ENCODE measurements at regions of chr16 and their contacts with region 1.

Region 1: DNA sequence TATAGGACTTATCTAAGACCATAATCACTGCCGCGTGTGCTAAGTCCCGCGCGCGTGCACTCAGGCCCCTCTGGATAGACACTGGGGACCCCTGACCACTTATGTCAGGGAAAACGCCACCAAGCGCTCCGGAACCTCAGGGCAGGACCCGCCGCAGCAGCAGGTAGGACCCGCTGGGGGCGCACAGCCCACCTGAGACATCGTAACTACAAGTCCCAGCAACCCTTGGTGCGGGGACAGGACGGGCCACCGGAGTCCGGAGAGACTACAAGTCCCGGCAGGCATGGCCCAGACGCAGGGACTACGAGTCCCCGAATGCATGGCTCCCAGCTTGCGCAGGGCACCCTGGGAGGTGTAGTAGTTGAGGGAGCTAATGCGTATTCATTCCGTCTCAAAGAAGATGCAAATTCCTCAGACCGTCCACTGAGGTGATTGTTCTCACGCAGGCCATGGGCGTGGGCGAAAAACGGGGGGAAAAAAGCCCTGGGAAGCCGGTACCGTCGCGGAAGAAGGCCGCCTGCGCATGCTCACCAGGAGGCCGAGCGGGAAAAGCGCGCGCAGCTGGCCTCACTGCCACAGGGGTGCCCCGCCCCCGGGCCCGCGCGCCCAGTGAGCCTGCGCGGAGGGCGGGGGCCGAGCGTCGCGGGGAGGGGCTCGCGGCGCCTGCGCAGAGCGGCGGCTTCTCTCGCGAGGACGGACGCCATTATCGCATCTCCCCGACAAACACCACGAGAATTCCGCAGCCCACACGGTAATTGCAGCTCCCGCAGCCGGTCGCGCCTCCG is at the start of gene BANP:
- DNase-seq: peak; percentile 96 to 99 (median 99)
- ATAC-seq: peak; percentile 93
- H3K4me3 ChIP-seq: peak within 1 kb of the TSS; percentile 83
- H3K4me3 Mint-ChIP-seq: peak within 1 kb of the TSS; percentile 92 to 100 (median 99)
- H3K27ac ChIP-seq: peak within 1 kb of the TSS; percentile 90
- H3K27ac Mint-ChIP-seq: peak within 1 kb of the TSS; percentile 97 to 100 (median 99)
- H3K4me1 ChIP-seq: peaks cover 15 to 33% of the 10 kb centered on the region in 2 donors
- H3K4me1 Mint-ChIP-seq: peaks cover 27 to 66% (median 43%) of the 10 kb centered on the region in 7 donors
- H3K27me3 ChIP-seq: no peaks in the 10 kb centered on the region
- H3K27me3 Mint-ChIP-seq: peaks cover 0 to 8% (median 2%) of the 10 kb centered on the region in 5 donors
- total RNA-seq, gene BANP: 43.6 to 81.2 (median 68.5) TPM

Region 2: GRCh38 chr16:87316923-87317749 is 633.8 kb before region 1 on chr16 and contains the start of gene C16orf95:
- CTCF ChIA-PET with region 1: no interaction called
- POLR2A ChIA-PET with region 1: interaction called, 4 read pairs
- intact Hi-C with region 1: loop called in 1 of 2 experiments (anchors 10 kb)
- DNase-seq: peak; percentile 93 to 100 (median 96)
- ATAC-seq: peak; percentile 96
- H3K4me3 ChIP-seq: peak within 1 kb of the TSS; percentile 86
- H3K4me3 Mint-ChIP-seq: peak within 1 kb of the TSS; percentile 92 to 100 (median 97)
- H3K27ac ChIP-seq: peak within 1 kb of the TSS; percentile 91
- H3K27ac Mint-ChIP-seq: peak within 1 kb of the TSS; percentile 91 to 99 (median 94)
- H3K4me1 ChIP-seq: peaks cover 8 to 11% of the 10 kb centered on the region in 2 donors
- H3K4me1 Mint-ChIP-seq: peaks cover 11 to 23% (median 16%) of the 10 kb centered on the region in 7 donors
- H3K27me3 ChIP-seq: no peaks in the 10 kb centered on the region
- H3K27me3 Mint-ChIP-seq: peaks cover 0 to 2% (median 0%) of the 10 kb centered on the region in 5 donors
- total RNA-seq, gene C16orf95: 1.3 to 8.6 (median 2.6) TPM

Region 3: GRCh38 chr16:87492721-87493607 is 458.0 kb before region 1 on chr16 and contains the start of gene ZCCHC14:
- CTCF ChIA-PET with region 1: no interaction called
- POLR2A ChIA-PET with region 1: no interaction called
- intact Hi-C with region 1: loop called in 1 of 2 experiments (anchors 2 kb)
- DNase-seq: peak; percentile 95 to 99 (median 98)
- ATAC-seq: peak; percentile 97
- H3K4me3 ChIP-seq: peak within 1 kb of the TSS; percentile 75
- H3K4me3 Mint-ChIP-seq: peak within 1 kb of the TSS; percentile 85 to 95 (median 90)
- H3K27ac ChIP-seq: peak within 1 kb of the TSS; percentile 66
- H3K27ac Mint-ChIP-seq: peak within 1 kb of the TSS; percentile 81 to 93 (median 85)
- H3K4me1 ChIP-seq: peaks cover 21 to 36% of the 10 kb centered on the region in 2 donors
- H3K4me1 Mint-ChIP-seq: peaks cover 24 to 59% (median 40%) of the 10 kb centered on the region in 7 donors
- H3K27me3 ChIP-seq: no peaks in the 10 kb centered on the region
- H3K27me3 Mint-ChIP-seq: peaks cover 0 to 53% (median 0%) of the 10 kb centered on the region in 5 donors
- total RNA-seq, gene ZCCHC14: 8.3 to 34.2 (median 23.5) TPM

Region 4: GRCh38 chr16:87895641-87896141 is 55.3 kb before region 1 on chr16:
- CTCF ChIA-PET with region 1: no interaction called
- POLR2A ChIA-PET with region 1: interaction called, 3 read pairs
- intact Hi-C with region 1: loop called in 1 of 2 experiments (anchors 2 kb)
- DNase-seq: peak in 4 of 9 donors; percentile 20 to 80 (median 28)
- ATAC-seq: peak; percentile 86
- H3K4me3 ChIP-seq: peak overlapping the region; percentile 22
- H3K4me3 Mint-ChIP-seq: peak overlapping the region in 8 of 10 donors; percentile 53 to 84 (median 60)
- H3K27ac ChIP-seq: peak overlapping the region; percentile 21
- H3K27ac Mint-ChIP-seq: peak overlapping the region in 8 of 9 donors; percentile 69 to 98 (median 86)
- H3K4me1 ChIP-seq: peaks cover 33 to 37% of the 10 kb centered on the region in 2 donors
- H3K4me1 Mint-ChIP-seq: peaks cover 21 to 50% (median 35%) of the 10 kb centered on the region in 7 donors
- H3K27me3 ChIP-seq: no peaks in the 10 kb centered on the region
- H3K27me3 Mint-ChIP-seq: no peaks in the 10 kb centered on the region

Region 5: GRCh38 chr16:88569985-88570690 is 619.2 kb after region 1 on chr16 and contains the start of gene ZC3H18:
- CTCF ChIA-PET with region 1: no interaction called
- POLR2A ChIA-PET with region 1: no interaction called
- intact Hi-C with region 1: loop called (anchors 1 kb)
- DNase-seq: peak; percentile 93 to 99 (median 96)
- ATAC-seq: peak; percentile 99
- H3K4me3 ChIP-seq: peak within 1 kb of the TSS; percentile 84
- H3K4me3 Mint-ChIP-seq: peak within 1 kb of the TSS; percentile 81 to 93 (median 87)
- H3K27ac ChIP-seq: peak within 1 kb of the TSS; percentile 91
- H3K27ac Mint-ChIP-seq: peak within 1 kb of the TSS; percentile 45 to 93 (median 89)
- H3K4me1 ChIP-seq: peaks cover 21% of the 10 kb centered on the region in 2 donors
- H3K4me1 Mint-ChIP-seq: peaks cover 10 to 39% (median 34%) of the 10 kb centered on the region in 7 donors
- H3K27me3 ChIP-seq: no peaks in the 10 kb centered on the region
- H3K27me3 Mint-ChIP-seq: no peaks in the 10 kb centered on the region
- total RNA-seq, gene ZC3H18: 74.0 to 97.8 (median 82.6) TPM

Measured in naive thymus-derived CD4-positive, alpha-beta T cell (primary cell).